BJ (cell line): ENCODE measurements at regions of chr11 and their contacts with region 1.

Region 1: DNA sequence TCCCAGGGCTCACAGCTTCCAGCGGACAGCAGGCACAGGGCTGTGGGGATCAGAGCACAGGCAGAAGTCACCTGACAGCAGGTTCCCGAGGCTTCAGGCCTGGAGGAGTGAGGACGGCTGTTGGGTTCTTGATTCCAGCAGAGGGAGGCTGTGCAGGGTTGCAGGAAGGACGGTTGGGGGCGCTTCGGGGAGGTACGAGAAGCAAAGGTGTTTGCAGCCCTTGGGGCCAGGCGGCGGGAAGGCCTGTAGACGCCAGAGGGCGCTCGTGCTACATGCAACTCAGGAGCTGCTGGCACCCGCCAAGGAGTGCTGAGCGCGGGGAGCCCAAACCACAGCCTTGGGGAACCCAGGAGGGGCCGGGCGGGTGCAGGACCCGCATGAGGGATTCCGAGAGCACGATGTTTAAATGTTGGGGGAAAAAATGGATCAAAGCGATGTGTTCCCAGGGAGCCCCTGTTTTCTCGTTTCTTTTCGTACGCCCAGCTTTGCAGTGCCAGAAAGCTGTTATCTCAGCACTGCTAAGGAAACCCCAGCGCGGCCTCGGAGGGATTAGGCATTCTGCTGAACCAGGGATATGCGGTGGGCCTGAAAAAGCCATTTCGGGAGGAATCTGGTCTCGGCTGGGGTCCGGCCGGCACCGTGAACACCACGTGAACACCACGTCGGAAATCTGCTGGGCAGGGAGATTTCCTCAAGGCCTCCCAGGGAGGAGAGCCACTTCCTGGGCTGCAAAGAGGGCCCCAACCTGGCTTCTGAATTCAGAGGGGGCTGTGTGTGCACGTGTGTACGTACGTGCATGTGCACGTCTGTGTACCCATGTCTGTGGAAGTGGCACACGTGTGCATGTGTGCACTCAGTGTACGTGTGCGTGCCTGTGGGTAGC is 88.1 kb downstream of the KCNQ1 start:
- DNase-seq: peak; percentile 13
- H3K4me3 ChIP-seq: no peak overlapping the region
- H3K27me3 ChIP-seq: peaks cover 2% of the 10 kb centered on the region; the same call in 1 of the 2 replicates
- CTCF ChIP-seq: peak; percentile 96

Region 2: DNA sequence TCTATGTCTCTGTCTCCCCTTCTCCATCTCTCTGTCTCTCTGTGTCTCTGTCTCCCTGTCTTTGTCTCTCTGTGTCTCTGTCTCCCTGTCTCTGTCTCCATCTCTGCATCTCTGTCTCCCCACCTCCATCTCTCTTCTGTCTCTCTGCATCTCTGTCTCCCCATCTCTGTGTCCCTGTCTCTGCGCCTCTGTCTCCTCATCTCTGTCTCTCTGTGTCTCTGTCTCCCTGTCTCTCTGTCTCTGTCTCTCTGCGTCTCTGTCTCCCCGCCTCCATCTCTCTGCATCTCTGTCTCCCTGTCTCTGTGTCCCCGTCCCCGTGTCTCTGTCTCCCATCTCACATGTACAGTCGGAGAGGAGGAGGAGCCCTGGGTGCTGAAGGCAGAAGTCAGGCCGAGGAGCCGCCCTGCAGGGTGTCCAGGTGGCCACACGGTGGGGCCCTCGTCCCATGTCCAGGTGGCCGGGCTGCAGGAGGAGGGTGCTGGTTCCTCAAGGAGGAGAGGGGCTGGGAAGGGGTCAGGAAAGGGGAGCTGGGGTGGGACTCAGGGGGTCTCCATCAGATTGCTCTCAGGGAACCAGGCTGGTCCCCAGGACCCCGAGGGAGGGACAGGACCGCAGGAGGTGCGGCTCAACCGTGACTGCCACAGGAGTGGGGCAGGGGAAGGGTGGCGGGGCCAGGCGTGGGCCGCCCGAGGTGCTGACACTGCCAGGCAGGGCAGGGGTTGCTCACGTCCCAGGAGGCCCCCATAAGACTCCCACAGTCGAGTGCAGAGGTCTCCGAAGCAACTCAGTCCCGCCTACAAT is 335.8 kb before region 1 on chr11:
- CTCF ChIA-PET with region 1: interaction called, 10 read pairs
- POLR2A ChIA-PET with region 1: no interaction called
- DNase-seq: no peak
- H3K4me3 ChIP-seq: no peak overlapping the region
- H3K27me3 ChIP-seq: no peaks in the 10 kb centered on the region
- CTCF ChIP-seq: peak; percentile 94

Region 3: GRCh38 chr11:2428322-2428795 is 104.6 kb before region 1 on chr11:
- CTCF ChIA-PET with region 1: interaction called, 90 read pairs
- POLR2A ChIA-PET with region 1: no interaction called
- DNase-seq: no peak
- H3K4me3 ChIP-seq: no peak overlapping the region
- H3K27me3 ChIP-seq: no peaks in the 10 kb centered on the region
- CTCF ChIP-seq: peak; percentile 86

Region 4: GRCh38 chr11:2518111-2518957 is 14.6 kb before region 1 on chr11:
- CTCF ChIA-PET with region 1: interaction called, 26 read pairs
- POLR2A ChIA-PET with region 1: no interaction called
- DNase-seq: no peak
- H3K4me3 ChIP-seq: no peak overlapping the region
- H3K27me3 ChIP-seq: no peaks in the 10 kb centered on the region
- CTCF ChIP-seq: no peak

Region 5: DNA sequence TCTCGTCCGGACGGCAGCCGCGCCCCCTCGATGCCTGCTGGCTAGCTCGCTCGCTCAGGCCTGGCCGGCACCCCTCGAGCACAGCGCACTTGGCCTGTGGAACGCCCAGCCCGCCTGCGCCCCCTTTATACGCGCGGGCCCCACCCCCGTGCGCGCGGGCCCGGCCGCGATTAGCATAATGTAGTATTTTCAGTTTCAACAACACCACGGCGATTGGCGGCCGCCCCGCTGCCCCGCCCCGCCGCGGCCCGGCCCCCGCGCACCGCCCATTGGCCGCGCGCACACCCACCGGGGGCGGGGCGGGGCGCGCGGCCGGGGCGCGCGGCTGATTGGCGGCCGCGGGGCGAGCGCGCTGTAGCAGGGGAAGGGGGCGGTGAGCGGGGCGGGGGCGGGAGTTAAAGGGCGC is 352.7 kb after region 1 on chr11 and contains the start of gene CDKN1C:
- CTCF ChIA-PET with region 1: interaction called, 772 read pairs
- POLR2A ChIA-PET with region 1: no interaction called
- DNase-seq: no peak
- H3K4me3 ChIP-seq: peak within 1 kb of the TSS; percentile 60
- H3K27me3 ChIP-seq: no peaks in the 10 kb centered on the region; the same call in 1 of the 2 replicates
- CTCF ChIP-seq: no peak
- polyA plus RNA-seq, gene CDKN1C: 2.1 and 2.5 TPM in 2 replicates

Region 6: GRCh38 chr11:2930704-2931428 is 397.9 kb after region 1 on chr11:
- CTCF ChIA-PET with region 1: interaction called, 12 read pairs
- POLR2A ChIA-PET with region 1: no interaction called
- DNase-seq: no peak
- H3K4me3 ChIP-seq: peak overlapping the region; percentile 90
- H3K27me3 ChIP-seq: no peaks in the 10 kb centered on the region
- CTCF ChIP-seq: peak; percentile 38

Region 7: DNA sequence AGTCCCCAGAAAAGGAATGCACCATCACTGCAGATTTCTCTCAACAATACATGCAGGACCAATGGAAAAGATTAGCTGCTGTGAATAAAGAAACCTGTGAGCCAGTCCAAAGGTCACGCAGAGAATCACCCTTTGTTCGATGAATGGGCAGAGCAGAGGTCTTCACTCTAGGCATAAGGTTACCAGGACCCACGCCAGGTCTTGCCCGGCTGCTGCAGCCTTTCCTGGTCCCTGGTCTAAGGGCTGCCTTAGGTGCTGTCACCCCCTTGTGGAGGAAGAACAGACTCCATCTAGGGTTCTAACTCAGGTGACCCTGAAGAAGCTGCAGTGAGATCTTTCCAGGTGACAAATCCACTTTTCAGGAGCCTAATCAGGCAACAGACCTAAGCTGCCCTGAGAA is 488.2 kb after region 1 on chr11:
- CTCF ChIA-PET with region 1: interaction called, 10 read pairs
- POLR2A ChIA-PET with region 1: no interaction called
- DNase-seq: no peak
- H3K4me3 ChIP-seq: no peak overlapping the region
- H3K27me3 ChIP-seq: no peaks in the 10 kb centered on the region
- CTCF ChIP-seq: peak; percentile 40